Testis (tissue), 5 donors: ENCODE measurements at regions of chr10 and their contacts with region 1.

Region 1: DNA sequence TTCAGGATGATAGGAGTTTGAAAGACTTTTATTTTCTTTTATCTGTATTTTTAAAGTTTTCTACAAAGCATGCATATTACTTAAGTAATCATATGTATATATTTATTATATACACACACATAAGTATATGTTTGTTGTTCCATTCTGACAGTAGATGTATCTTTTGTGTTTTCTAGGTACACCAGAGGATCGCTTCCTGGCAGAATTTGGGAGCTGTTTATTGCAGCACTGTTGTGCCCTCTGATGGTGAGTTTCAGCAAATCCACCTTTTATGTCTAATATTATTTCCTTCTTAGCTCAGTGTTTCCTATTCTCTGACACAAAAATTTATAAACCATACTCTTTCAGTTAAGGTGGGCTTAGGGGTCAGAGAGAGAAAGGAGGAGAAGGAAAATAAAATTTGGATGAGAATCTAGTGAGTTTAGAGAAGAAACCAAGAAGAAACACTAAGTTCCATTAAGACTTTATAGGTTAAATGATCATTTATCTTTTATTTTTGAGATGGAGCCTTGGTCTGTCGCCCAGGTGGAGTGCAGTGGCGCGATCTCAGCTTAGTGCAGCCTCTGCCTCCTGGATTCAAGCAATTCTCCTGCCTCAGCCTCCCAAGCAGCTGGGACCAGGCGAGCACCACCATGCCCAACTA is 59.2 kb upstream of the OIT3 start:
- DNase-seq: peak; percentile 69
- H3K4me3 ChIP-seq: no peak overlapping the region
- H3K27ac ChIP-seq: no peak overlapping the region
- H3K4me1 ChIP-seq: no peaks in the 10 kb centered on the region
- H3K27me3 ChIP-seq: no peaks in the 10 kb centered on the region
- CTCF ChIP-seq: peak; percentile 49 to 71 (median 52)
- POLR2A ChIP-seq: no peak

Region 2: GRCh38 chr10:72364239-72364777 is 470.0 kb before region 1 on chr10:
- intact Hi-C with region 1: loop called (anchors 5 kb)
- DNase-seq: peak; percentile 91
- H3K4me3 ChIP-seq: no peak overlapping the region
- H3K27ac ChIP-seq: peak overlapping the region; percentile 19 to 24
- H3K4me1 ChIP-seq: peaks cover 11% of the 10 kb centered on the region
- H3K27me3 ChIP-seq: no peaks in the 10 kb centered on the region
- CTCF ChIP-seq: peak; percentile 80 to 87 (median 85)
- POLR2A ChIP-seq: no peak

Region 3: DNA sequence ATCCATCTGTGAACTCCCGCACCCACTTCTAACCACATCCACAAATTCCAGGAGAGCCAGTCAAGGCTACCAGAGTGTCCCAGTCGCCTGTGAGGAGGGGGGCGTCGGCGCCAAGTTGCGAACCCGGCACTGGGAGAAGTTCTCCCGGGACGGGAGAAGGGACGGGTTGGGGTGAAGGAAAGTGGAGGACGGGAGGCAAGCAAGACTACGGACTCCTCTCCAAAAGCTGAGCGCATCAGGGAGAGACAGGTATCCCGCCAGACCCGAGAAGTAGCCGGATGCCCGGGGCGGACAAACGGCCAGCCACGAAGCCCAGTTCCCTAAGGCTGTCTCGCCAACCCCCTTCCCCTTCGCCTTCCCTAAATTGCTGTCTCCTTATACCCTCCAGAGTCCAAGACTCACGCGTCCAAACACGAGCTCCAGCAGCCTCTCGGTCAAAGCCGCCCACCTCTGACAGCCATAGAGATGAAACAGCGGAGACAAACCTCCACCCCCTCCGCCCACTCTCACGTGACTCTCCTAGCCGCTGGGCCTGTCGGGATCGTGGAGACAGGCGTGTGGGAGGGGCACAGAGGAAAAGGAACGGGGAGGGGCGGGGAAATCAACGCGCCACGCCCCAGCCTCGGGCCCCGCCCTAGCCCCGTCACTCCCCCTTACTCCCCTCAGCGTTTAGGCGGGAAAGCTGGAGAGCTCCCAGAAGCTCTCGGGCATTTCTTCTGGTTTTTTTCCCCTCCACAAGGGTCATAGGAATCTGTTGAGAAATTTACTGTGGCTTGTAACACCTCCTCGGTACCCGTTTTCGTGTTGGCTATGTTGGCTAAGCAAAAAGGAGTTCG is 208.5 kb before region 1 on chr10 and contains the start of gene MICU1:
- intact Hi-C with region 1: no loop called
- DNase-seq: peak; percentile 99
- H3K4me3 ChIP-seq: peak within 1 kb of the TSS; percentile 75 to 91
- H3K27ac ChIP-seq: peak within 1 kb of the TSS; percentile 85 to 89
- H3K4me1 ChIP-seq: peaks cover 5% of the 10 kb centered on the region
- H3K27me3 ChIP-seq: no peaks in the 10 kb centered on the region
- CTCF ChIP-seq: peak in 1 of 3 experiments; percentile 6
- POLR2A ChIP-seq: peak; percentile 56
- total RNA-seq, gene MICU1: 34.7 to 42.7 TPM

Region 4: DNA sequence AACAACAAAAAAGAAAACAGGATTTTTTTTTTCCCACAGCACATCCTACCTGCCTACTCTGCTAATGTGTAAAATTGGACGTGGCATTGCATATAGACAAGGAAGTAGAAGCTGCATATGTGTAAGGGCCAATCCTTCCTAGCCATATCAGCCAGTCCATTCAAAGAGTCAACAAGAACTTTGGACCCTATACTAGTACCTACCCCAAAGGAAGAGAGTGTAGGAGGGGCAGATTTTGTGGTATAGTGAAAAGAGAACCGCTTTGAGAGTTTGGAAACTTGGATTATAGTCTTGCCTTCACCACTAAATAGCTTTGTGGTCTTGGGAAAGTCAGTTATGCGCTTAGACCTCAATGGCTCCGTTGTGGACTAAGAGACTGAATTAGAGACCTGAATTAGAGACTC is 154.5 kb before region 1 on chr10:
- intact Hi-C with region 1: no loop called
- DNase-seq: no peak
- H3K4me3 ChIP-seq: no peak overlapping the region
- H3K27ac ChIP-seq: no peak overlapping the region
- H3K4me1 ChIP-seq: no peaks in the 10 kb centered on the region
- H3K27me3 ChIP-seq: no peaks in the 10 kb centered on the region
- CTCF ChIP-seq: no peak
- POLR2A ChIP-seq: no peak

Region 5: GRCh38 chr10:72692057-72692910 is 142.0 kb before region 1 on chr10 and contains the start of gene MCU:
- intact Hi-C with region 1: loop called (anchors 10 kb)
- DNase-seq: peak; percentile 98
- H3K4me3 ChIP-seq: peak within 1 kb of the TSS; percentile 82 to 94
- H3K27ac ChIP-seq: peak within 1 kb of the TSS; percentile 84 to 90
- H3K4me1 ChIP-seq: peaks cover 2% of the 10 kb centered on the region
- H3K27me3 ChIP-seq: no peaks in the 10 kb centered on the region
- CTCF ChIP-seq: no peak
- POLR2A ChIP-seq: peak; percentile 92
- total RNA-seq, gene MCU: 16.9 to 20.0 TPM

Region 6: GRCh38 chr10:72740528-72740927 is 93.8 kb before region 1 on chr10:
- intact Hi-C with region 1: no loop called
- DNase-seq: no peak
- H3K4me3 ChIP-seq: no peak overlapping the region
- H3K27ac ChIP-seq: no peak overlapping the region
- H3K4me1 ChIP-seq: peaks cover 11% of the 10 kb centered on the region
- H3K27me3 ChIP-seq: no peaks in the 10 kb centered on the region
- CTCF ChIP-seq: no peak
- POLR2A ChIP-seq: no peak

Region 7: GRCh38 chr10:72981882-72982529 is 147.7 kb after region 1 on chr10:
- intact Hi-C with region 1: no loop called
- DNase-seq: no peak
- H3K4me3 ChIP-seq: no peak overlapping the region
- H3K27ac ChIP-seq: no peak overlapping the region
- H3K4me1 ChIP-seq: no peaks in the 10 kb centered on the region
- H3K27me3 ChIP-seq: no peaks in the 10 kb centered on the region
- CTCF ChIP-seq: no peak
- POLR2A ChIP-seq: no peak